Calu3 (cell line): ENCODE measurements at regions of chr18 and their contacts with region 1.

Region 1: DNA sequence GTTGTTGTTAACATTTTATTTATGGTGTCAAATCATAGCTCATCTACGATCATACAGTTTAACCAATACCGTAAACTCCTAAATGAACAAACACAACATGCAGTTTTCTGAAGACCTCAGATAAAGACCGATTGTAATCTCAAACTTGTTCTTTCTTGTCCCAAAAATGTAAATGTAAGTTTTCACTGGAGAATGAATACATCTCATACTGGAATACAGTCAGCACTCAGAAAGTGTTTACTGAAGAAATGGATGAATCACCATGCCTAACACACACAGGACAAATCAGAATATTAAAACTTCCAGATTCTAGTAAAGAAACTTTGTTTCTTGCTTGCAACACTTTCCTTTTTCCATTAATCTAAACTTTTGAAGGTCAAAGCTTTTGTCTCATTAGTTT is 380.5 kb downstream of the DLGAP1 start:
- DNase-seq: no peak
- H3K4me3 Mint-ChIP-seq: no peak overlapping the region
- H3K27ac Mint-ChIP-seq: no peak overlapping the region
- H3K4me1 Mint-ChIP-seq: no peaks in the 10 kb centered on the region
- H3K27me3 Mint-ChIP-seq: no peaks in the 10 kb centered on the region
- CTCF ChIP-seq: no peak

Region 2: DNA sequence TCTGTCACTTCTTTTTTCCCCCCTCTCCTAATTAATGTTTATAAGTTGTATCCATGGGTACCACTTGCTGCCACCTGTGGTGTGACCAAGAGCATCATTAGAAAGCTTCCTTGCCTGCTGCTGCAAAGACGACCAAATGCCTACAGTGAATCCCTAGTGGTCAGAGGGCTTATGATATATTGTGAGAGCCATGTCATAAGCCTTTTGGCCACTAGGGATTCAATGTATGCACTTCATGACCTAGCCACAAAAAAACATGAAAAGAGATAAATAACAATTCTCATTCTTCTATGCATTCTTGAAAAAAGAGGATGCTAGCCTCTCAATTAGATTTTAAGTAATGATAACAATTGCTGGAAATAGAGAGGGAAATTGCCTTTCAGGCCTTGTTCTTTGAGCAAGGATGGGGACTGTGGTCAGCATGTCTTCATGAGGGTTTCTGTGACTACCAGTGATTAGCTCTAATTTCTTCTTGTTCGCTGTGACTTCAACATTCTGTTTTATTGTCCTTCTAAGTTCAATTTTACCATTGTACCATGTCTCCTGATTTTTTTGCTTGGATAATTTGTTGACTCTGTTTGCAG is 189.3 kb before region 1 on chr18:
- CTCF ChIA-PET with region 1: no interaction called
- intact Hi-C with region 1: loop called (anchors 10 kb)
- DNase-seq: no peak
- H3K4me3 Mint-ChIP-seq: no peak overlapping the region
- H3K27ac Mint-ChIP-seq: no peak overlapping the region
- H3K4me1 Mint-ChIP-seq: peaks cover 11% of the 10 kb centered on the region
- H3K27me3 Mint-ChIP-seq: no peaks in the 10 kb centered on the region
- CTCF ChIP-seq: no peak

Region 3: DNA sequence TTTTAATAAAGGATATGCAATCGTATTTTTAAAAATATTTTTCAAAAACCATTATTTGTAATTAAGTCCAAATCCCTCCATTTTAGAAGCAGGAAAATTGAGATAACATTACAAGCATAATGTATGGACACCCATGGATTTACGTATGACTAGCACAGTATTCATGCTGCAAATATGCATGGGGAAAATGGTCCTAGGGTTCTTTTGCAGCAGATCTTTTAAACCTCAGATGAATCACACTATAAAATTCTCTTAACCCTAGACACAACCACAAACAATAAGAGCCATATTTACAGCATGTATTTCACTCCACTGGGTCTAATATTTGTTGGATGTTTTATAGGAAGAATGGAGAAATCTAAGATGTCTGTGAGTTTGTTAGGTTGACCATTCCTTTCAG is 171.3 kb before region 1 on chr18:
- CTCF ChIA-PET with region 1: no interaction called
- intact Hi-C with region 1: no loop called
- DNase-seq: no peak
- H3K4me3 Mint-ChIP-seq: no peak overlapping the region
- H3K27ac Mint-ChIP-seq: no peak overlapping the region
- H3K4me1 Mint-ChIP-seq: peaks cover 18% of the 10 kb centered on the region
- H3K27me3 Mint-ChIP-seq: peaks cover 29% of the 10 kb centered on the region
- CTCF ChIP-seq: no peak